ENCODE measurements at regions of chr17 and their contacts with region 1.

Region 1: GRCh38 chr17:877630-878029 is 95.5 kb downstream of the MRM3 start:
- DNase-seq: no peak
- H3K4me3 ChIP-seq: no peak overlapping the region
- H3K27ac ChIP-seq: no peak overlapping the region
- H3K27me3 ChIP-seq: peaks cover 0 to 10% (median 0%) of the 10 kb centered on the region in 45 donors
- CTCF ChIP-seq: no peak

Region 2: GRCh38 chr17:846901-847843 is 30.5 kb before region 1 on chr17:
- intact Hi-C with region 1: loop called in 1 of 2 experiments (anchors 1 kb)
- DNase-seq: no peak
- H3K4me3 ChIP-seq: peak overlapping the region in 44 of 59 donors; percentile 1 to 52 (median 29)
- H3K27ac ChIP-seq: peak overlapping the region in 12 of 59 donors; percentile 6 to 63 (median 36)
- H3K27me3 ChIP-seq: peaks cover 0 to 71% (median 4%) of the 10 kb centered on the region in 45 donors
- CTCF ChIP-seq: no peak

Region 3: DNA sequence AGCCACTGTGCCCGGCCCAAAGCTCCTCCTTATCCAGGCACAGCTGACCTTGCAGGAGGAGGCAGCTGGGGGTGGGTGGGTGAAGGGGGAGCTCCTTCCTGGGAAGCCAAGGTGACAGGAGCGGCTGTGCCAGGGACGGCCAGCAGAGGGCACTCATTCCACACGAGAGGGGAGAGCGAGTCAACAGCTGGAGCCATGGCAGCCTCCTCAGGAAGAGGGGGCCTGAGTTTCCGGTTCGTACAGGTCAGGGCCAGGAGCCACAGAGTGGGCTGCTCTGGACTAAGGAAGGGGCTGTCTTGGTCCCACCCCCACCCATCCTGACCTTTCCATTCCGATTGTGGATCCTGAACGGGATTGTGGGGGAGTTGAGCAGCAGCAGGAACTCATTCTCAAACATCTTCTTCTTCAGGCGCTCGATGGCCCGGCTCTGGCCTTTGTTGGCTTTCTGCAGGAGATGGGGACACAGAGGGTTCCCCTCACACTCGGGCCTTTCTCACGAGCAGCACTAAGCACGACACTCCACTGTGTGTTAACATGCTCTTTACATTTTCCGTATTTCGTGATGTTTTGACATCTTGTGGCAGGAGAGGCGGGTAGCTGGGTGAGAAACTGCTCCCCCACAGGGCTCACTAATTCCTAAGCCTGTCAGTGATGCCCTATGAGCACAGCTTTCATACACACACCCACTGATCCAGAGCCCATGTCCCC is 180.9 kb after region 1 on chr17:
- intact Hi-C with region 1: no loop called
- DNase-seq: peak in 2 of 10 donors; percentile 51 to 57
- H3K4me3 ChIP-seq: no peak overlapping the region
- H3K27ac ChIP-seq: peak overlapping the region in 13 of 59 donors; percentile 6 to 69 (median 24)
- H3K27me3 ChIP-seq: peaks cover 0 to 4% (median 0%) of the 10 kb centered on the region in 45 donors
- CTCF ChIP-seq: peak in 54 of 56 donors; percentile 12 to 68 (median 53)

Measured in dorsolateral prefrontal cortex (tissue), 120 donors.